Prostate gland (tissue), 2 donors: ENCODE measurements at regions of chr2 and their contacts with region 1.

Region 1: GRCh38 chr2:240513549-240514287 is 44.1 kb downstream of the ANKMY1 start:
- DNase-seq: peak; percentile 65
- H3K4me3 ChIP-seq: no peak overlapping the region
- H3K27ac ChIP-seq: no peak overlapping the region
- H3K4me1 ChIP-seq: no peaks in the 10 kb centered on the region
- H3K27me3 ChIP-seq: no peaks in the 10 kb centered on the region
- CTCF ChIP-seq: peak in 3 of 4 experiments; percentile 56 to 87 (median 72)
- POLR2A ChIP-seq: no peak

Region 2: GRCh38 chr2:240111251-240111650 is 402.5 kb before region 1 on chr2:
- intact Hi-C with region 1: no loop called
- DNase-seq: no peak
- H3K4me3 ChIP-seq: no peak overlapping the region
- H3K27ac ChIP-seq: no peak overlapping the region
- H3K4me1 ChIP-seq: no peaks in the 10 kb centered on the region
- H3K27me3 ChIP-seq: no peaks in the 10 kb centered on the region
- CTCF ChIP-seq: no peak
- POLR2A ChIP-seq: no peak

Region 3: DNA sequence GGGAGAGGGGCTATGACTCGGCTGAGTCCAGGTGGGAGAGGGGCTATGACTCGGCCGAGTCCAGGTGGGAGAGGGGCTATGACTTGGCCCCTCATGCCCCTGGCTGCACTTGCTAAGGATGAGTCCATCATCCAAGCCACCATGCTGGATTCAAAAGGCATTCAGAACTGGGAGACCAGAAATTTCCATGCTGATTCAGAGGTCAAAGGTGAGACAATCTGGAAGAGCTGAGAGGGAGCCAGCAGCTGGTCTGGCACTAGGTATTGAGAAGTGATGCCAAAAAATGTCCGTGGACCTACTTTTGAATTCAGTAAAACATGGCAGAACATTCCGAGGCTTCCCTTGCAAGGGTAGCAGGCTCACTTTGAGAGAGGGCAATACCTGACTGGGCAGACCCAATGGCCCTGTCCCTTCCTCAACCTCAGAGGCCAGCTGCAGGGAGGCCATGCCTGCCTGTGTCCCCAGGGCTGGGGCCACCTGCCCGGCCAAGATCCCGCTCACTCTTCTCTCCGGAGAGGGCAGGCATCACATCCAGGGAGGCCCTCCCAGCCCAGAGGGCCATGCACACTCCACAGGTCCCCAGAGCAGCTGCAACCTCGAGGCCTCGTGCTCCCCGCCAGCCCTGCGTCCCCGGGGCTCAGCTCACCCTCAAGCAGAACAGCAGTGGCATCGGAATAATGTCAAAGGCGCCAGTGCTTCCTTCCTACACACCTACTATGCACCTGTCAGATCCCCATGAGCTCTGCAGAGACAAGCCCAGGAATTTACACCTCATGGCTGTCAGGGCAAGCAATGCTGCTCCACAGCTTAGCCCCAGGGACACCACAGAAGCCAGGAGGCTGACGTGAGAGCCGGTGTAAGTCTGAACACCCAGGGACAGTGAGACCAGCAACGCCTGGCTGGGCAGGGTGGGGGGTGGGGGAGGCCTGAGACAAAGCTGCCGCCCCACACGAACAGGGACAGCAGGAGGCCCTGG is 158.4 kb before region 1 on chr2:
- intact Hi-C with region 1: no loop called
- DNase-seq: no peak
- H3K4me3 ChIP-seq: no peak overlapping the region
- H3K27ac ChIP-seq: no peak overlapping the region
- H3K4me1 ChIP-seq: no peaks in the 10 kb centered on the region
- H3K27me3 ChIP-seq: no peaks in the 10 kb centered on the region
- CTCF ChIP-seq: no peak
- POLR2A ChIP-seq: no peak

Region 4: GRCh38 chr2:240704651-240705050 is 190.9 kb after region 1 on chr2:
- intact Hi-C with region 1: loop called (anchors 10 kb)
- DNase-seq: no peak
- H3K4me3 ChIP-seq: no peak overlapping the region
- H3K27ac ChIP-seq: no peak overlapping the region
- H3K4me1 ChIP-seq: no peaks in the 10 kb centered on the region
- H3K27me3 ChIP-seq: no peaks in the 10 kb centered on the region
- CTCF ChIP-seq: no peak
- POLR2A ChIP-seq: no peak